Naive thymus-derived CD4-positive, alpha-beta T cell (primary cell): ENCODE measurements at regions of chr12 and their contacts with region 1.

Region 1: GRCh38 chr12:24778486-24779304 is 170.2 kb downstream of the BCAT1 start:
- DNase-seq: no peak
- ATAC-seq: no peak
- H3K4me3 ChIP-seq: no peak overlapping the region
- H3K4me3 Mint-ChIP-seq: no peak overlapping the region
- H3K27ac ChIP-seq: no peak overlapping the region
- H3K27ac Mint-ChIP-seq: no peak overlapping the region
- H3K4me1 ChIP-seq: no peaks in the 10 kb centered on the region
- H3K4me1 Mint-ChIP-seq: no peaks in the 10 kb centered on the region
- H3K27me3 ChIP-seq: no peaks in the 10 kb centered on the region
- H3K27me3 Mint-ChIP-seq: peaks cover 6 to 21% (median 16%) of the 10 kb centered on the region in 5 donors

Region 2: DNA sequence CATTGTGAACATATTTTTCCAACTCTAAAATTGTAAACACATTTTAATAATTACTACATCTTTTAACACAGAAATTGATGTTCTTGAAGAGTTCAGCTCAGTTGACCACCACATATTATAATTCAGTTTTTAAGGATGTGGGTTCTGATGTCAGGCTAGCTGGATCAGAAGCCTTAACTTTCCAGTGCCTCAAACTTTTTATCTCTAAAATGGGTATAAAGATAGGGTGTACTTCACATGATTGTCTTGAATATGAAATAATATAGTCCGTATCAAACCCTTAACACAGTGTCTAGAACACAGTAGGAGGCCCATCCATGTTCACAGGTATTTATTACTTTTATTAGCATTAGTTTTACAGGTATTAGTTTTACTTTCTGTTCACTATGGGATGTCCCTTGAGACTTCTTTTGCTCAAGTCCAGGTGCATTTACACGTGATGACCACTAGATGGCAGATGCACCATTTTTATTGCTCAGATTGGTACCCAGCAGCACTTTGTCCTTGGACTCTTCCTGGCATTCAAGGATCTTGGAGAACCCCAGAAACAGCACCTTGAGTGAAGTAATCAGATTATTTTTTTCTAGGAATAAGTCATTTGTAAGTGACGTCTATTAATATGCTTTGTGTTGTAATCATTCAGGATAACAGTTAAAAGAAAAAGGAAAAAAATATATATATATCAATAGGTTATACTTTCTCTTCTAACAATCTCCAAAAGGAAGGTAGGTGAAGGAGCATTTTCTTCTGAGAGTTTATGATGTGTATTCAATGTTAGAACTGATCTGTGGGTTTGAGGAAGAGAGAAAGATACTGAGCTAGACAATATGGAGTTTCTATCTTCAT is 1573.5 kb before region 1 on chr12:
- CTCF ChIA-PET with region 1: no interaction called
- POLR2A ChIA-PET with region 1: no interaction called
- intact Hi-C with region 1: loop called in 1 of 2 experiments (anchors 1 kb)
- DNase-seq: peak in 6 of 9 donors; percentile 5 to 29 (median 24)
- ATAC-seq: peak; percentile 70
- H3K4me3 ChIP-seq: no peak overlapping the region
- H3K4me3 Mint-ChIP-seq: no peak overlapping the region
- H3K27ac ChIP-seq: no peak overlapping the region
- H3K27ac Mint-ChIP-seq: no peak overlapping the region
- H3K4me1 ChIP-seq: no peaks in the 10 kb centered on the region
- H3K4me1 Mint-ChIP-seq: no peaks in the 10 kb centered on the region
- H3K27me3 ChIP-seq: no peaks in the 10 kb centered on the region
- H3K27me3 Mint-ChIP-seq: peaks cover 0 to 6% (median 5%) of the 10 kb centered on the region in 5 donors

Region 3: GRCh38 chr12:24109381-24110039 is 669.2 kb before region 1 on chr12:
- CTCF ChIA-PET with region 1: no interaction called
- POLR2A ChIA-PET with region 1: no interaction called
- intact Hi-C with region 1: loop called in 1 of 2 experiments (anchors 10 kb)
- DNase-seq: no peak
- ATAC-seq: no peak
- H3K4me3 ChIP-seq: no peak overlapping the region
- H3K4me3 Mint-ChIP-seq: no peak overlapping the region
- H3K27ac ChIP-seq: no peak overlapping the region
- H3K27ac Mint-ChIP-seq: no peak overlapping the region
- H3K4me1 ChIP-seq: no peaks in the 10 kb centered on the region
- H3K4me1 Mint-ChIP-seq: no peaks in the 10 kb centered on the region
- H3K27me3 ChIP-seq: no peaks in the 10 kb centered on the region
- H3K27me3 Mint-ChIP-seq: no peaks in the 10 kb centered on the region